Endothelial cell of umbilical vein (primary cell): ENCODE measurements at regions of chr16 and their contacts with region 1.

Region 1: DNA sequence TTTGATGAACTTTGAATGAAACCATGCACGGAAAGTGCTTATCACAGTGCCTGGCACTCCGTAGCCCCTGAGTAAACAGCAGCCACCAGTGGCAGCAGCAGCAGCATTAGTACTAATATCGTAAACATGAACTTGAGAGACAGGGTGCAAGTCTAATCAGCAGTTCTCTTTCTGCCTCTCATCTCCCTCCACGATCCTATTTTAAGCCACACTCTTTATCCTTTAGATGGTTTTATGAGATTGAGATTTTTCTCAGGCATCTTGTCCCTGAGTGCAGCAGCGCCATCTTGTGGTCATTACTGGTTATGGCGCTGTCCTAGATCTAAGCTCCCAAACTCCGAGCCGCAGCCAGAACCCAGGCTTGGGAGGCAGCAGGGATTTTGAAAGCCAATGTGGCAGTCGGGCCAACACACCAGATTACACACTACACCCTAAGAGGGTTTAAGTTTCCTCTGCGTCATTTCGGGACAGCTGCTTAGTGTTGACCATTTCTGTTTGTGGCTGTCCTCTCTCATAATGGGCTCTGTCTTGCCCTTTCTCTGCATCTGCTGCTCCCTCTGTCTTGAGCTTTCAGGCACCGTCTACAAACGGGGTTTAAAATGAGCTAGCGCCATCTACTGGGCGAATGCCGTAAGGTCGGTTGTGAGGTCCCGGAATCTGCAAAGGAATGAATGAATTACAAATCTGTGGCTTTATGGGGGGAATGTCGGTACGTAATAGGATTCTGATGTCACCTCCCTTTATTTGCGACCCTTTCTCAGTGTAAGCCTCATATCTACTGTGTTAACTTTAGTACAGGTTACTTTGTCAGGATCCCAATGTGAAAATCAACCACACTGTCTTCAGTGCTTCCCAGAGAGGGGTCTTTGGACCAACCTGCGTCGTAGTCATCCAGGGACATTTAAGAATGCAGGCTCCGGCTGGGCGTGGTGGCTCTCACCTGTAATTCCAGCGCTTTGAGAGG is 64.5 kb downstream of the CYLD start:
- DNase-seq: peak; percentile 91
- H3K4me3 ChIP-seq: peak overlapping the region in 2 of 3 experiments; percentile 19 to 63
- H3K27ac ChIP-seq: no peak overlapping the region
- H3K4me1 ChIP-seq: no peaks in the 10 kb centered on the region
- H3K27me3 ChIP-seq: no peaks in the 10 kb centered on the region
- CTCF ChIP-seq: peak; percentile 76 to 85
- POLR2A ChIP-seq: no peak

Region 2: DNA sequence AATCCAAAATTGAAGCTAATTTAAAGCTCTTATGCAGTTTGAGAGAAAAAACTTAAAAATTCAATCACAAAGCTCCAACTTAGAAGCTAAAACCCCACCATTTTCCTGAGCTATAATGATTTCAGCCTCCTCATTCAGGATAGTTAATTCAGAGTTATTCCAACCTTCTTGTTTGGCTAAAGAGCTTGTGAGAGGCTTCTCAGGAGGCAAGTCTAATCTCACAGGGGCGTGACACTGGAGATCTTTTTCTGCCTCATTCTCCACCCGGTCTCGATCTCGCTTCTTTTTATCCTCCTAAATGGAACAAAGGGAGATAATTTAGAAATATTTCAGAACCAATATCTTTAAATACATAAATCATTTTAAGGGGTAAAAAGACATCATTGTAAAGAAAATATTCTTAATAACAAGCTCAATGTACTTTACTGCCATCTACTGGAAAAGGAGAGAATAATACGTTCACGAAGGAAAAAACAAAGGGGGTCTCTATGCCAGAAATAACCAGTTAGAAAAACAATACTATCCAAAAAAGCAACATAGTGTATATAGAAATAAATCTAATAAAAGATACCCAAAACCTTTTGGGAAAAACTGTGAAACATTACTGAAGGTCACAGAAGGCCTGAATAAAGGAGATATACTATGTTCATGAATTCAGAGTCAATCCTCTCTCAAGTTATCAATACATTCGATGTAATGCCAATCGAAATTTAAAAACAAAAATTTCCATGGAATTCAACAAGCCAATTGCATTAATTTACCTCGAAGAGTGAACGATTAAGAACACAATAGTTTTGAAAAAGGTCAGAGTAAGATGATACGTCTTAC is 451.5 kb before region 1 on chr16:
- CTCF ChIA-PET with region 1: interaction called, 14 read pairs
- POLR2A ChIA-PET with region 1: no interaction called
- dilution Hi-C with region 1: no loop called
- intact Hi-C with region 1: no loop called
- DNase-seq: peak; percentile 33
- H3K4me3 ChIP-seq: no peak overlapping the region
- H3K27ac ChIP-seq: no peak overlapping the region
- H3K4me1 ChIP-seq: no peaks in the 10 kb centered on the region
- H3K27me3 ChIP-seq: no peaks in the 10 kb centered on the region
- CTCF ChIP-seq: peak; percentile 25 to 37
- POLR2A ChIP-seq: no peak

Region 3: DNA sequence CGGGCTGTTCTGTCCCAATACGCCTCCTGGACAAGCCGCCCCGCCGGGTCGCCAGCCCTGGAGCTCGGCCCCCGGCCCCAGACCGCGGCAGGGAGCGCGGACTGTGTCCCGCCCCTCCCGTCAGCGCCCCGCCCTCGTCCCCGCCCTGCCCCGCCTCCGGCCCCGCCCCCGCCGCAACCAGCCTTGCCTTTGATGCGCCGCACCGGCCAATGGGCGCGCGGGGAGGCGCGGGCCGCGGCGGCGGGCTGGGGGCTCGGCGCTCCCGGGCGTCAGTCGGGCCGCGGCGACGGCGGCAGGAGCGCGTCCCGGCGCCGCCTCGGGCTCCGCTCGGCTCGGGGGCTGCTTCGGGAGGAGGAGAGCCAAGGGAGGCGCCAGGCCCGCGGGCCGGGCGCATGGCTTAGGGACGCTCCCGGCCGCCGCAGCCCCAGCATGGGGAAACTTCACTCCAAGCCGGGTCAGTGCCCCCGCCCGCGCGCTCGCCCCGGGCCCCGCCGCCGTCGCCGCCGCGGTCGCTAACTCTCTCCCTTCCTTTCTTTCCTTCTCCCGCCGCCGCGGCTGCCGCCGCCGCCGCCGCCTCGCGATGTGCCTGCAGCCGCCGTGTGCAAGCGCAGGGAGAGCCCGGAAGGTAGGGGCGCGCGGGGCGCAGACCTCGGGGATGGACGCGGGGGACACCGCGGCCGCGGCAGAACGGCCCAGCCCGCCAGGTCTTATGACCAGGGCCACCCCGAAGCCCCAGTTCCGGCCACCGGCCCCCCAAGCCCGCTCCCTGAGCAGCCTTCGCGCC is 258.1 kb before region 1 on chr16 and contains the start of gene NKD1:
- CTCF ChIA-PET with region 1: interaction called, 19 read pairs
- POLR2A ChIA-PET with region 1: no interaction called
- dilution Hi-C with region 1: no loop called
- intact Hi-C with region 1: no loop called
- DNase-seq: peak; percentile 26
- H3K4me3 ChIP-seq: peak within 1 kb of the TSS; percentile 47 to 52 (median 48)
- H3K27ac ChIP-seq: no peak within 1 kb of the TSS
- H3K4me1 ChIP-seq: peaks cover 4% of the 10 kb centered on the region
- H3K27me3 ChIP-seq: peaks cover 37% of the 10 kb centered on the region in 2 experiments
- CTCF ChIP-seq: no peak
- POLR2A ChIP-seq: no peak
- total RNA-seq, gene NKD1: 0.32 TPM in 1 of 2 replicates, not detected in the other

Region 4: GRCh38 chr16:50665128-50665878 is 141.1 kb before region 1 on chr16:
- CTCF ChIA-PET with region 1: interaction called, 179 read pairs
- POLR2A ChIA-PET with region 1: no interaction called
- dilution Hi-C with region 1: no loop called
- intact Hi-C with region 1: loop called (anchors 2 kb)
- DNase-seq: peak; percentile 77
- H3K4me3 ChIP-seq: peak overlapping the region; percentile 42 to 76 (median 72)
- H3K27ac ChIP-seq: no peak overlapping the region
- H3K4me1 ChIP-seq: peaks cover 3% of the 10 kb centered on the region
- H3K27me3 ChIP-seq: no peaks in the 10 kb centered on the region
- CTCF ChIP-seq: peak; percentile 77 to 80
- POLR2A ChIP-seq: no peak

Region 5: GRCh38 chr16:50724306-50724705 is 82.1 kb before region 1 on chr16:
- CTCF ChIA-PET with region 1: interaction called, 11 read pairs
- POLR2A ChIA-PET with region 1: no interaction called
- dilution Hi-C with region 1: no loop called
- intact Hi-C with region 1: no loop called
- DNase-seq: no peak
- H3K4me3 ChIP-seq: no peak overlapping the region
- H3K27ac ChIP-seq: no peak overlapping the region
- H3K4me1 ChIP-seq: no peaks in the 10 kb centered on the region
- H3K27me3 ChIP-seq: no peaks in the 10 kb centered on the region
- CTCF ChIP-seq: no peak
- POLR2A ChIP-seq: no peak

Region 6: GRCh38 chr16:50763211-50763610 is 43.2 kb before region 1 on chr16:
- CTCF ChIA-PET with region 1: interaction called, 17 read pairs
- POLR2A ChIA-PET with region 1: no interaction called
- dilution Hi-C with region 1: no loop called
- intact Hi-C with region 1: no loop called
- DNase-seq: no peak
- H3K4me3 ChIP-seq: no peak overlapping the region
- H3K27ac ChIP-seq: no peak overlapping the region
- H3K4me1 ChIP-seq: no peaks in the 10 kb centered on the region
- H3K27me3 ChIP-seq: no peaks in the 10 kb centered on the region
- CTCF ChIP-seq: no peak
- POLR2A ChIP-seq: no peak

Region 7: DNA sequence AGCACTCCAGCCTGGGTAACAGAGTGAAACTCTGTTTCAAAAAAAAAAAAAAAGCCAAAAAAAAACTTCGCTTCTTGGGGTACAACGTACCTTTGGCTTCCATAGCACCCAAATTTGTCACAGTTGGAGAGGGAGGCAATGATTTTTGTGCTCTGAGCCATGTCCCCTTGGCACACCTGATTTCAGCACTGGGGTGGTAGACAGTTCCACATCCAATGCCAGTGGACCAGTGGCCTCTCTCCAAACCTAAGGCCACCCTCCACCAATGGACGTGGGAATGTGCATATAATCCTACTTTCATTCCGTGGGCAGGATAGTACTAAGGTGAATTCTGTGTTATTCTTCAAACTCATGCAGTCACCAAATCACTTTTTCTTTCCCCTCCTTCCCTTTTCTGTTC is 297.2 kb after region 1 on chr16:
- CTCF ChIA-PET with region 1: no interaction called
- POLR2A ChIA-PET with region 1: no interaction called
- dilution Hi-C with region 1: no loop called
- intact Hi-C with region 1: no loop called
- DNase-seq: no peak
- H3K4me3 ChIP-seq: no peak overlapping the region
- H3K27ac ChIP-seq: no peak overlapping the region
- H3K4me1 ChIP-seq: no peaks in the 10 kb centered on the region
- H3K27me3 ChIP-seq: no peaks in the 10 kb centered on the region
- CTCF ChIP-seq: no peak
- POLR2A ChIP-seq: no peak